HEK293 (cell line): ENCODE measurements at regions of chr15 and their contacts with region 1.

Region 1: DNA sequence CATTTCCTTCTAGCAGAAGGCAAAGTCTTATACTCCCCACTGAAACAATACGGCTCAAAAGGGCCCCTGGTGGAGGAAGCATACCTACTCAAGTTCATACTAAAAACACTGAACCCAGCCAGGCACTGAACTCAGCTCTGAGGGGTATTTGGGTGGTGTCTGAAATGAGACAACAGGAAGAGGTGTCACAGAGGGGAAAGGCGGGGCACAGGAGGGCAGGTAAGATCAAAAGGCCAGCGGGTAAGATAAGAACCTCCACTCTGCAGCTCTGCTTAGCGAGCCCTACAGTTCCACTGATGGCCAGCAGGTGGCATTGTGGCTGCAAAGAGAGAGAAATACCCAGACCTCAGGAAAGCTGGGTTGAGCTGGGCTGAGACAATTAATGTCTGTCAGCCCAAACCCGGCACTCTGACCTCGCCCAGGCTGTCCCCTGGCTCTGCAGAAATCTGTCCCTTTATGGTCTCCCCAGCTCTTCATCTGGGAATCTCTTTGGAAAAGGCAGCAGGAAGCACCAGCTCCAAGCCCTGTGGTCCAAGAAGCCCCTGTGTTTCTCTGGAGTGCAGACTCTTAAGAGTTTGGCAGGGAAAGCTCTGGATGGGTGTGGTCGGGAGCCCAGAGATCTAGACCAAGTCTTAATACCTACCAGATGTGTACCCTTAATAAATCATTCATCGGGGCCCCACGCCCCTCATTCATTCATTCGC is 8.4 kb downstream of the MFGE8 start:
- H3K4me3 ChIP-seq: no peak overlapping the region
- H3K27ac ChIP-seq: no peak overlapping the region
- H3K4me1 ChIP-seq: peaks cover 4% of the 10 kb centered on the region
- CTCF ChIP-seq: peak; percentile 87

Region 2: GRCh38 chr15:88878720-88879184 is 26.0 kb before region 1 on chr15:
- CTCF ChIA-PET with region 1: interaction called, 22 read pairs
- POLR2A ChIA-PET with region 1: no interaction called
- H3K4me3 ChIP-seq: no peak overlapping the region
- H3K27ac ChIP-seq: no peak overlapping the region
- H3K4me1 ChIP-seq: no peaks in the 10 kb centered on the region
- CTCF ChIP-seq: peak; percentile 91

Region 3: DNA sequence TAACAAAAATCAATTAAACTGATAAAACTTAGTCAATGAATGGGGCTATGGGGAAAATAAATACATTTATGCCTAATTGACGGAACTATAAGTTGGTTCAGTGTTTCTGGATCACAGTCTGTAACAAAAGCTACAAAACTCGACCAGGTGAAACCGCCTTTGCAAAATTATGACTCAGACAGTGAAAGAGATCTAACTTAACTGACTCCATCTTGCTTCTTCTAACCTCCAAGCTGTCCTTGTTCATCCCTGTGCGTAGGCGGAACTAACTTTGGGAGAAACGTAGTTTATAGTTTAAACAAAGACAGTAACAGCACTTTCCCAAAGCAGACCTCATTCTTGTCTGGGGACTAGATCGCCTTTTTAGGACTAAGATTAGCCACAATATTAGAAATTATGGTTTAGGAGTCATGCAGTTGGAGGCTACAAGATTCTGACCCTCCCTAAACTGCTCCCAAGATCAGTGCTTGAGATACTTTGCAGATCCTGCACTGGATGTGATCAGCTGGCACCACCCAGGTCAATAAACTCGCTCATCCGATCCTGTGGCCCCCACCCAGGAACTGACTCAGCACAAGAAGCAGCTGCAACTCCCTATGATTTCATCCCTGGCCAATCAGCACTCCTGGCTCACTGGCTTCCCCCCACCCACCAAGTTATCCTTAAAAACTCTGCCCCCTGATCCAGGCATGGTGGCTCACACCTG is 15.6 kb after region 1 on chr15:
- CTCF ChIA-PET with region 1: interaction called, 42 read pairs
- POLR2A ChIA-PET with region 1: interaction called, 5 read pairs
- H3K4me3 ChIP-seq: no peak overlapping the region
- H3K27ac ChIP-seq: no peak overlapping the region
- H3K4me1 ChIP-seq: peaks cover 5% of the 10 kb centered on the region; the same call in 1 of the 2 replicates
- CTCF ChIP-seq: no peak

Region 4: DNA sequence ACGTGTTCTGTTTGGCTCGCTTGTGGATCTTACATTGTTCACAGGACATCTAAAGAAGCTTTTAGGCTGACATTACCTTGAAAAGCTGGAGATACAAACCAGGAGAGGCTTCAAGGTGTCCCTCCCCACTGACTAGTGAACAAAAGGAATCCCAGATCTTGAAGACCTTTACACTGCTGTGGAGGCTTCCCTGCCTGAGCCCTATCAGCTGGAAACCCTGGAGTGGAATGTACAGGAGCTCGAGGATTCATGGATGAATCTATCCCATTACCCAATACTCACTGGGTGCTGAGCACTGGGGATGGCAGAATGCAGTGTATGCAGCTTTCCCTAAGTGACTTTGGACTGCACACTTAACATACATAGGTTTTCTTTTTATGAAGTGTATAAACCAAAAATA is 90.7 kb after region 1 on chr15:
- CTCF ChIA-PET with region 1: interaction called, 53 read pairs
- POLR2A ChIA-PET with region 1: no interaction called
- H3K4me3 ChIP-seq: no peak overlapping the region
- H3K27ac ChIP-seq: no peak overlapping the region
- H3K4me1 ChIP-seq: no peaks in the 10 kb centered on the region
- CTCF ChIP-seq: no peak

Region 5: GRCh38 chr15:89017370-89018066 is 112.7 kb after region 1 on chr15:
- CTCF ChIA-PET with region 1: interaction called, 65 read pairs
- POLR2A ChIA-PET with region 1: no interaction called
- H3K4me3 ChIP-seq: peak overlapping the region; percentile 33
- H3K27ac ChIP-seq: no peak overlapping the region
- H3K4me1 ChIP-seq: no peaks in the 10 kb centered on the region
- CTCF ChIP-seq: peak; percentile 90

Region 6: DNA sequence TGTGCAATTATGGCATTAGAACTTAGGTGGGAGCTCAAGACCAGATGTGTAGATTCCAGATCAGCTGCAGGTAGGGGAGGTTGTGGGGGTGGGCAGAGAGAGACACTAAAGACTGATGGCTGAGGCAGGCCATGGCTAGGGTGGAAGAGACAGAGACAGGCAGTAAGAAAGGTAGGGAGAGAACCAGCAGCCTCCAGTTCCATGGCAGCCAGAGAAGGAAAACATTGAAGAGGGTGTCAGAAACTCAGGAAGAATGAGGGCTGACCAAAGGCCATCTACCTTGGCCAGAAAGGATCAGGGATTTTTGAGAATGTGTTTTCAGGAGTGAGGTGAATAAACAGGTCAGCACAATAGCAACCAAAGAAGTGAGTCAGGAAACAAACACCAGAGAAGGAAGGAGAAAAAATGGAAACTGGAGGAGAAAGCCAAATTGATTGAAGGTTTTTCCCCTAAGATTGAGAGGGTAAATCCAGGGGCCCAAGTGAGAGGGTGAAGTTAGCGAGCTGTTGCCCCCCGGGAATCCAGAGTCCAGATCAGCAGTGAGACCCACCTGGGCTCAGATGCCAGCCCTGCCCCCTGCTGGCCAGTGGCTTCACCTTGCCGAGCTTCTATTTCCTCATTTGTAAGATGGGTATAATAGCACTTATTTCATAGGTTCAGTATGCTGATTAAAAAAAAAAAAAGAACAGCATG is 224.5 kb after region 1 on chr15:
- CTCF ChIA-PET with region 1: interaction called, 22 read pairs
- POLR2A ChIA-PET with region 1: no interaction called
- H3K4me3 ChIP-seq: no peak overlapping the region
- H3K27ac ChIP-seq: no peak overlapping the region
- H3K4me1 ChIP-seq: no peaks in the 10 kb centered on the region
- CTCF ChIP-seq: peak; percentile 18; the same call in 1 of the 2 replicates